Caco-2 (cell line): ENCODE measurements at regions of chr14 and their contacts with region 1.

Region 1: GRCh38 chr14:105617201-105617777 is 90.9 kb downstream of the TMEM121 start:
- DNase-seq: no peak
- H3K4me3 ChIP-seq: no peak overlapping the region
- H3K4me3 Mint-ChIP-seq: no peak overlapping the region
- H3K27ac Mint-ChIP-seq: no peak overlapping the region
- H3K4me1 ChIP-seq: no peaks in the 10 kb centered on the region
- H3K4me1 Mint-ChIP-seq: no peaks in the 10 kb centered on the region
- H3K27me3 ChIP-seq: no peaks in the 10 kb centered on the region
- H3K27me3 Mint-ChIP-seq: peaks cover 19% of the 10 kb centered on the region
- CTCF ChIP-seq: no peak

Region 2: GRCh38 chr14:105760691-105761346 is 143.5 kb after region 1 on chr14:
- CTCF ChIA-PET with region 1: no interaction called
- POLR2A ChIA-PET with region 1: no interaction called
- intact Hi-C with region 1: loop called (anchors 5 kb)
- DNase-seq: no peak
- H3K4me3 ChIP-seq: no peak overlapping the region
- H3K4me3 Mint-ChIP-seq: no peak overlapping the region
- H3K27ac Mint-ChIP-seq: no peak overlapping the region
- H3K4me1 ChIP-seq: no peaks in the 10 kb centered on the region
- H3K4me1 Mint-ChIP-seq: no peaks in the 10 kb centered on the region
- H3K27me3 ChIP-seq: no peaks in the 10 kb centered on the region
- H3K27me3 Mint-ChIP-seq: peaks cover 16% of the 10 kb centered on the region
- CTCF ChIP-seq: no peak